H1 (cell line): ENCODE measurements at regions of chr16 and their contacts with region 1.

Region 1: DNA sequence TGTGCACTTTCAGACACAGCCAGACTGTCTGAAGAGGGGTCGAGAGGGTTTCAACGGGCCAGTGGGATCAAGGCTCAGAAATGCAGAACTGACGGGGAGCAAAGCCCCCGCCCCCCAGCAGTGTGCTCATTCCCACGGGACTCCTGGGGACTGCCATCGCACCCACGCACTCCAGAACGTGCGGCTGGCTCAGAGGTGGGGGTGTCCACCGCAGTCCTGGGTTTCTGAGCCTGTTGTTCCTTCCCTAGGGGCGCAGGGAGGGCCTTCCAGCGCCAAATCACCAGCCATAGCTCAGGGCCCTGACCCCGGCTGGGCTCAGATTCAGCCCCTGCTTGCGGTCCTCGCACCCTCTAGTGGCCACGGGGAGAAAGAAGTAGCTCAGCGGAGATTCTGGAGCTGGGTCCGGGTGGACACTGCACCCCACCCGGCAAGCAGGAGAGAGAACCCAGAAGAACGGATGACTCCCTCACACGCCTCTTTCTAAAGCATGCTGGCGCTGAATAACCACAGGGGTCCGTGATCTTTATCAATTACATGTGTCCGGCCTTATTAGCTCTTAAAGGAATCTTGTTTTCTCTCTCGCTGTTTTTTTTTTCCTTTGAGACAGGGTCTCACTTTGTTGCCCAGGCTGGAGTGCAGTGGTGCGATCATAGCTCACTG is 45.0 kb upstream of the USP7 start:
- DNase-seq: peak; percentile 61 to 93
- H3K4me3 ChIP-seq: 0 out of 8 replicates have a peak overlapping the region, but pooled peaks of 1 of the 4 experiments have one; percentile 4
- H3K27ac ChIP-seq: no peak overlapping the region
- H3K4me1 ChIP-seq: peaks cover 0 to 10% (median 5%) of the 10 kb centered on the region in 4 experiments; a peak in 6 of 7 replicates
- H3K27me3 ChIP-seq: no peaks in the 10 kb centered on the region; a peak in 1 of 7 replicates
- CTCF ChIP-seq: peak; percentile 87 to 97 (median 97)
- EP300 ChIP-seq: no peak
- POLR2A ChIP-seq: no peak
- RAD21 ChIP-seq: peak; percentile 95 to 98

Region 2: DNA sequence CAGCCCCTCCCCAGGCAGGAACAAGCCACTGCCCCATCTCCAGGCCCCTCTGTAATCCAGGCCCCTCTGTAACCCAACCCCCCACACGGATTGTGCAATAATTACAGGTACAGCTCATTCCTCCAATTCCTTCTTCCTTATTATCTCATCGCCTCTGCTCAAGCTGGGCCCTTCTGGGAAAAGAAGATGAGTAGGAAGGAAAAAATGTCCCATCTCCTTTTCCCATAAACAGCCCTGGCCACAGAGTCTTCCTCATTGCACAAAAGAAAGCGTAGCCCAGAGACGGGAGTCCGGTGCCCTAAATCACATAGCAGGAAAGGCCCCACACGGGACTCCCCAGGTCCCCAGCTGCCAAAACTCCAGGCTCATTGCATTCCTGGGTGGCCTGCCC is 130.2 kb before region 1 on chr16:
- CTCF ChIA-PET with region 1: interaction called, 37 read pairs
- POLR2A ChIA-PET with region 1: no interaction called
- DNase-seq: no peak
- H3K4me3 ChIP-seq: no peak overlapping the region
- H3K27ac ChIP-seq: no peak overlapping the region
- H3K4me1 ChIP-seq: peaks cover 3 to 9% (median 8%) of the 10 kb centered on the region in 4 experiments
- H3K27me3 ChIP-seq: no peaks in the 10 kb centered on the region
- CTCF ChIP-seq: no peak
- EP300 ChIP-seq: no peak
- POLR2A ChIP-seq: no peak
- RAD21 ChIP-seq: no peak

Region 3: GRCh38 chr16:8905168-8905762 is 103.5 kb before region 1 on chr16:
- CTCF ChIA-PET with region 1: interaction called, 18 read pairs
- POLR2A ChIA-PET with region 1: no interaction called
- DNase-seq: no peak
- H3K4me3 ChIP-seq: no peak overlapping the region
- H3K27ac ChIP-seq: no peak overlapping the region
- H3K4me1 ChIP-seq: no peaks in the 10 kb centered on the region
- H3K27me3 ChIP-seq: no peaks in the 10 kb centered on the region
- CTCF ChIP-seq: peak; percentile 9 to 72 (median 63)
- EP300 ChIP-seq: no peak
- POLR2A ChIP-seq: no peak
- RAD21 ChIP-seq: peak; percentile 67 to 73

Region 4: DNA sequence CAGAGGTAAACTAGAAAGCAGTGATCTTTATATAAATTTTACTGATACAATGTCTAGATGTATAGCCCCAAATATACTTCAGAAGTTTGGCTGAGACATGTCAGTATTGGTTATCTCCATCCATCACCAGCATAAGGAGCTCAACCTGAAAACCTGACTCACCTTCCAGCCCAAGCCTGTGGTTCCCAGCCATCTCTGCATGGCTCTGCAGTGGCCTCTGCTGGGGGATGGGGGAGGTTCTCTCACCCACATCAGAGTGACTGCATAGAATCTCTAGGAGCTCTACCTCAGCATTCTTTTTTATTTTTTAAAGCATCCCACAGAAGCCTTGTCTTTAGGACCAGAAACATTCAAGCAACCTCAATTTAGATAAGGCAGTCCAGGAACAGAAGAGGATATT is 72.3 kb before region 1 on chr16:
- CTCF ChIA-PET with region 1: interaction called, 189 read pairs
- POLR2A ChIA-PET with region 1: interaction called, 5 read pairs
- DNase-seq: peak in 1 of 2 experiments; percentile 39
- H3K4me3 ChIP-seq: no peak overlapping the region
- H3K27ac ChIP-seq: no peak overlapping the region
- H3K4me1 ChIP-seq: peaks cover 3 to 10% (median 6%) of the 10 kb centered on the region in 4 experiments
- H3K27me3 ChIP-seq: no peaks in the 10 kb centered on the region
- CTCF ChIP-seq: peak; percentile 76 to 77 (median 77)
- EP300 ChIP-seq: no peak
- POLR2A ChIP-seq: no peak
- RAD21 ChIP-seq: peak; percentile 60 to 74

Region 5: GRCh38 chr16:8958344-8959167 is 50.2 kb before region 1 on chr16:
- CTCF ChIA-PET with region 1: interaction called, 25 read pairs
- POLR2A ChIA-PET with region 1: interaction called, 7 read pairs
- DNase-seq: no peak
- H3K4me3 ChIP-seq: no peak overlapping the region
- H3K27ac ChIP-seq: no peak overlapping the region
- H3K4me1 ChIP-seq: peaks cover 24 to 39% (median 34%) of the 10 kb centered on the region in 4 experiments
- H3K27me3 ChIP-seq: no peaks in the 10 kb centered on the region
- CTCF ChIP-seq: no peak
- EP300 ChIP-seq: no peak
- POLR2A ChIP-seq: no peak
- RAD21 ChIP-seq: no peak

Region 6: GRCh38 chr16:8998114-8998513 is 10.6 kb before region 1 on chr16:
- CTCF ChIA-PET with region 1: interaction called, 54 read pairs
- POLR2A ChIA-PET with region 1: interaction called, 3 read pairs
- DNase-seq: no peak
- H3K4me3 ChIP-seq: no peak overlapping the region
- H3K27ac ChIP-seq: no peak overlapping the region
- H3K4me1 ChIP-seq: no peaks in the 10 kb centered on the region
- H3K27me3 ChIP-seq: no peaks in the 10 kb centered on the region
- CTCF ChIP-seq: no peak
- EP300 ChIP-seq: no peak
- POLR2A ChIP-seq: no peak
- RAD21 ChIP-seq: no peak